Aorta (tissue), 5 donors: ENCODE measurements at regions of chr17 and their contacts with region 1.

Region 1: GRCh38 chr17:55238179-55238930 is 26.4 kb upstream of the HLF start:
- DNase-seq: peak; percentile 94 to 97
- ATAC-seq: peak; percentile 99
- H3K4me3 ChIP-seq: peak overlapping the region; percentile 36 to 63
- H3K27ac ChIP-seq: peak overlapping the region in 1 of 2 donors; percentile 5
- H3K4me1 ChIP-seq: no peaks in the 10 kb centered on the region
- H3K27me3 ChIP-seq: no peaks in the 10 kb centered on the region

Region 2: GRCh38 chr17:55120651-55121050 is 117.7 kb before region 1 on chr17:
- intact Hi-C with region 1: no loop called
- DNase-seq: no peak
- ATAC-seq: no peak
- H3K4me3 ChIP-seq: no peak overlapping the region
- H3K27ac ChIP-seq: no peak overlapping the region
- H3K4me1 ChIP-seq: no peaks in the 10 kb centered on the region
- H3K27me3 ChIP-seq: no peaks in the 10 kb centered on the region

Region 3: GRCh38 chr17:55295411-55296170 is 57.2 kb after region 1 on chr17:
- intact Hi-C with region 1: loop called (anchors 2 kb)
- DNase-seq: no peak
- ATAC-seq: peak; percentile 88
- H3K4me3 ChIP-seq: no peak overlapping the region
- H3K27ac ChIP-seq: peak overlapping the region; percentile 69 to 77
- H3K4me1 ChIP-seq: peaks cover 0 to 4% of the 10 kb centered on the region in 2 donors
- H3K27me3 ChIP-seq: no peaks in the 10 kb centered on the region